Dendritic cell treated with granulocyte-macrophage colony-stimulating factor and Interleukin-4, amounts not matched to agents 40 ng/mL and 50 ng/mL, for 4 days (primary cell): ENCODE measurements at regions of chr11 and their contacts with region 1.

Region 1: DNA sequence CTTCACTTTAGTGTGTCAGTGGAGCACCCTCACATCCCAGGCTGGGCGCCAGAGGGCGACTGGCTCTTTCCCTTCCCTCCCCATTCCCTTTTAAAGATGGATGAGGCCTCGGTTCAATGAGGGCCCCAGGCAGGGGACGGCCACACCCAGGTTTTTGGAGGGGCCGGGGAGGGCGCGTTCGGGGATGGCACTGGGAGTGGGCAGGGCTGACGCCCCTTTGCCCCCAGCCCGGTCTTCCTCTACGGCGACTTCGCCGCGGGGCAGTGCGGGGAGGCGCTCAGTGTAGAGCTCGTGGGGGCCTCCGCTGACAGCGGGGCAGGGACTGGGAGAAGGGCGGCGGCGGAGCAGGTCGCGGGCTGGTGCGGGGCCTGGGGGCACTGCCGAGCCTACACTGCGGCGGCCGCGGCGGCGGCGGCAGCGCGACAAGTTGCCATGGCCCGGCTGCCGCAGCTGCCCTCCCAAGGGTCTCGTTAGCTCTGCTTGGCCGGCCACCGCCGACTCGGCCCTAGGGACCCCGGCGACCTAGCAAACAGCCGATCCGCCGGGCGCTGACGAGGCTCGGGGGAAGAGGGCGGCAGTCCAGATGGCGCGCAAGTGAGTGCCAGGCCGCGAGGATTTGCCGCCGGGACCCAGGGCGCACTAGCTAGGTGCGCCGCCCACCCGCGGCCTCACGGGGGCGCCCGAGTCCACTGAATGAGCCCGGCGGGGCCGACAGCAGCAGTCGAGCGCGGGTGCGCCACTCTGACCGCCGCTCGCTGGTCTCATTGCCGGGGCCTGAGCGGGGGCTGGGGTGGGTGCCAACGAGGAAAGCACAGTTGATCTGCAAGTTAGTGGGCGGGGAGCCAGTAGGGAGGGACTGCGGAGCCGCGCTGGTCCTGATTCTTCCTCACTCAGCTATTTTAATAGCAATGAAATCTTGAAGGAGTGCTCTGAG is 92.7 kb downstream of the RRM1 start:
- H3K4me3 Mint-ChIP-seq: peak overlapping the region; percentile 77
- H3K27ac Mint-ChIP-seq: no peak overlapping the region
- H3K4me1 Mint-ChIP-seq: peaks cover 5% of the 10 kb centered on the region
- H3K27me3 Mint-ChIP-seq: peaks cover 7% of the 10 kb centered on the region

Region 2: DNA sequence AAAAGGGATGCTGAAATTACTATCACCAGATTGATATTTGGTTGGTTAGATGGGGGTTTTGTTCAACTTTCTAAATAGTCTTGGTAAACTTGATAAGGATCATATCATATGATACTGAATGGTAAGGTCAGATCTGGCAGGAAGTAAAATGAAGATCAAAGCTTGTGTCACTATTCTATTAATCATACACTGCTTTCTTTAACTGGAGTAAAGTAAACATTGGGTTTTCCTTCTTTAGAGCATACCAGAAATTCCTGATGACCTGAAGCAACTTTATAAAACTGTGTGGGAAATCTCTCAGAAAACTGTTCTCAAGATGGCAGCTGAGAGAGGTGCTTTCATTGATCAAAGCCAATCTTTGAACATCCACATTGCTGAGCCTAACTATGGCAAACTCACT is 52.5 kb before region 1 on chr11:
- intact Hi-C with region 1: no loop called
- H3K4me3 Mint-ChIP-seq: no peak overlapping the region
- H3K27ac Mint-ChIP-seq: no peak overlapping the region
- H3K4me1 Mint-ChIP-seq: no peaks in the 10 kb centered on the region
- H3K27me3 Mint-ChIP-seq: no peaks in the 10 kb centered on the region

Region 3: DNA sequence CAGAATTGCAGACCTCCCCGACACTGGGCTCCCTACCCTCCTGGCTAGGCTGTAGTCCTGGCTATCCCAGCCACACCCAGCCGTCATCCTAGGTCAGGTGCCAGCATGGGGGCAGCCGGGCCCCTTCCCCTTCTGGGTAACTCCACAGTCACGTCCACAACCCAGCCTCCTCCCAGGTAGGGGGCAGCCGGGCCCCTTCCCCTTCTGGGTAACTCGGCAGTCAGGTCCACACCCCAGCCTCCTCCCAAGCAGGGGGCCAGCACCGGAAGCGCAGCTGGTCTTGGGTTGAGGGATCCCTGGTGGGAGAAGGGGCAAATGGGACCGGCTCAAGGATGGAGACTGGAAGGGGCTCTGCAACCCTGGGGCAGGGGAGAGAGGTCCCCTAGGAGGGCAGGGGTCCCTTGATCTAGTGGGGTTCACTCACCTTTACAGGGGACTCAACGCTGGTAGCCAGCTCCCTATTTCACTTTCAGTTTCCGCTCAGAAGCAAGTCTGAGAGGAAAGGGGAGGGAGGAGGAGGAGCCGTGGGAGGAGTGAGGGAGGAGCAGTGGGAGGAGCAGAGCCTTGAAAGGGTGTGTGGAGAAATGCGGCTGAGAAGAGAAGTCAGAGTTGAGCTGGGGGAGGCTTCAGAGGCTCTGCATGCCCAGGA is 206.0 kb after region 1 on chr11 and contains the start of gene TRIM21:
- intact Hi-C with region 1: loop called (anchors 5 kb)
- H3K4me3 Mint-ChIP-seq: peak within 1 kb of the TSS; percentile 91
- H3K27ac Mint-ChIP-seq: peak within 1 kb of the TSS; percentile 95
- H3K4me1 Mint-ChIP-seq: peaks cover 49% of the 10 kb centered on the region
- H3K27me3 Mint-ChIP-seq: no peaks in the 10 kb centered on the region

Region 4: GRCh38 chr11:4493480-4493818 is 306.1 kb after region 1 on chr11:
- intact Hi-C with region 1: loop called (anchors 1 kb)
- H3K4me3 Mint-ChIP-seq: no peak overlapping the region
- H3K27ac Mint-ChIP-seq: no peak overlapping the region
- H3K4me1 Mint-ChIP-seq: peaks cover 12% of the 10 kb centered on the region
- H3K27me3 Mint-ChIP-seq: peaks cover 11% of the 10 kb centered on the region

Region 5: GRCh38 chr11:4539603-4540219 is 352.4 kb after region 1 on chr11:
- intact Hi-C with region 1: loop called (anchors 1 kb)
- H3K4me3 Mint-ChIP-seq: no peak overlapping the region
- H3K27ac Mint-ChIP-seq: no peak overlapping the region
- H3K4me1 Mint-ChIP-seq: no peaks in the 10 kb centered on the region
- H3K27me3 Mint-ChIP-seq: peaks cover 15% of the 10 kb centered on the region

Region 6: GRCh38 chr11:5666391-5666770 is 1479.1 kb after region 1 on chr11:
- intact Hi-C with region 1: no loop called
- H3K4me3 Mint-ChIP-seq: no peak overlapping the region
- H3K27ac Mint-ChIP-seq: no peak overlapping the region
- H3K4me1 Mint-ChIP-seq: no peaks in the 10 kb centered on the region
- H3K27me3 Mint-ChIP-seq: no peaks in the 10 kb centered on the region